Activated naive CD4-positive, alpha-beta T cell treated with anti-CD3 and anti-CD28 coated beads for 36 hours (primary cell): ENCODE measurements at regions of chr18 and their contacts with region 1.

Region 1: GRCh38 chr18:57833443-57834101 is 30.5 kb upstream of the ATP8B1 start:
- DNase-seq: peak; percentile 66
- H3K4me3 Mint-ChIP-seq: peak overlapping the region; percentile 49
- H3K27ac Mint-ChIP-seq: peak overlapping the region; percentile 81
- H3K4me1 Mint-ChIP-seq: peaks cover 36% of the 10 kb centered on the region
- H3K27me3 Mint-ChIP-seq: peaks cover 15% of the 10 kb centered on the region

Region 2: DNA sequence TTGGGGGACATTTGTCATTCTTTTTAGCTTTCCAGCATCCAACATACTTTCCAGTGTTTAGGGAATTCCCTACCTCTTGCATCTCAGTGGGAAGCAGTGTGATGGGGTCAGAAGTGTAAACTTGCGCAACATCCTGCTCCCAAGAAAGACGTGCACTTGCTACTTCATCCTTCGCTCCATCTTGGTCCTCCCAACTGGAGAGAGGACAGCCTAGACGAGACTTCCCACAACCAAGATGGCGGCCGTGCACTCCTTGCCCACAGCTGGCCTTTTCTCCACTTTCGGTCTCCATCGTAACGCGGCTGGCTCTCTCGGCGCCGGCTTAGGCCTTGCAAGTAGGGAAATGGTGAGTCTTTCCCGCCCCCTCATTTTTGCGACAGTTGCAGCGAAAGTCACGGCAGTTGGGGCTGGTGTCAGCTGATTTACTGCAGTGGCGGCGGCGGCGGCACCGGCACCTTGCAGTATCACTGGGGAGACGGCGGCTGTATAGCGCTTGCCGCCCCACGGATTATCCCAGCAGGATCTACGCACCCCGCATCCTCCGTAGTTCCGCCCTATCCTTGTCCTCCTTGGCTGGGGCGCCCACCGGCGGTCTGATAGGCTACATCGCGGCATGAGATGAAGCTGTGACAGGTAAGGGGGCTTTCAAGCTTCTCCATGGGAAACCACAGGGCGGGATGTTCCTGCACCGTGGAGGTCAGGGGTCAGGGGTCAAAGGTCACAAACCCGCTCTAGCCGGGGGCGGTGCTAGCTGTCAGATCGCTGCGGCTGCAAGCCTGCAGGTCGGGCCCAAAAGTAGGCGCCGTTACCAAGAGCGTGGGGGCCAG is 1182.4 kb before region 1 on chr18 and contains the start of gene WDR7:
- CTCF ChIA-PET with region 1: no interaction called
- intact Hi-C with region 1: loop called (anchors 10 kb)
- DNase-seq: peak; percentile 97
- H3K4me3 Mint-ChIP-seq: peak within 1 kb of the TSS; percentile 93
- H3K27ac Mint-ChIP-seq: peak within 1 kb of the TSS; percentile 95
- H3K4me1 Mint-ChIP-seq: peaks cover 42% of the 10 kb centered on the region
- H3K27me3 Mint-ChIP-seq: no peaks in the 10 kb centered on the region
- total RNA-seq, gene WDR7: 17.3 to 19.5 TPM

Region 3: DNA sequence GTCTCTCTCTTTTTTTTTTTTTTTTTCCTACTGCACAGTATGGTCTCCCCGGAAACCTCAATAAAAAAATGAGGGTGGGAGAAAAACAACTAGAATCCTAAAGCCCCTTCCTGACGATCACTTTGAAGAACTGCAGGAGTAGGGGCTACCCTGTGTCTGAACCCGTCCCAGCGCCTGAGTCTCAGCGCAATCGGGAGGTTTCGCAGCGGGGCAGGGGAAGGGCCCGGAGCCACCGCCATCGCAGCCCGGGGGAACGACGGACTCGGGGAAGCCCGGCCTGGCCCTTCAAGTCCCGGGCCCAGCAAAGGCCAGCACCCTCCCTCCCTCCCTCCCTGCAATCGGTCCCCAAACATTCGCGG is 212.3 kb before region 1 on chr18:
- CTCF ChIA-PET with region 1: no interaction called
- intact Hi-C with region 1: loop called (anchors 5 kb)
- DNase-seq: peak; percentile 28
- H3K4me3 Mint-ChIP-seq: peak overlapping the region; percentile 98
- H3K27ac Mint-ChIP-seq: peak overlapping the region; percentile 95
- H3K4me1 Mint-ChIP-seq: peaks cover 32% of the 10 kb centered on the region
- H3K27me3 Mint-ChIP-seq: no peaks in the 10 kb centered on the region

Region 4: GRCh38 chr18:57819671-57820460 is 13.7 kb before region 1 on chr18:
- CTCF ChIA-PET with region 1: no interaction called
- intact Hi-C with region 1: no loop called
- DNase-seq: peak; percentile 24
- H3K4me3 Mint-ChIP-seq: no peak overlapping the region
- H3K27ac Mint-ChIP-seq: no peak overlapping the region
- H3K4me1 Mint-ChIP-seq: no peaks in the 10 kb centered on the region
- H3K27me3 Mint-ChIP-seq: peaks cover 11% of the 10 kb centered on the region

Region 5: GRCh38 chr18:57921708-57922107 is 88.1 kb after region 1 on chr18:
- CTCF ChIA-PET with region 1: no interaction called
- intact Hi-C with region 1: loop called (anchors 5 kb)
- DNase-seq: peak; percentile 63
- H3K4me3 Mint-ChIP-seq: no peak overlapping the region
- H3K27ac Mint-ChIP-seq: no peak overlapping the region
- H3K4me1 Mint-ChIP-seq: no peaks in the 10 kb centered on the region
- H3K27me3 Mint-ChIP-seq: peaks cover 15% of the 10 kb centered on the region

Region 6: GRCh38 chr18:58615140-58616132 is 781.9 kb after region 1 on chr18:
- CTCF ChIA-PET with region 1: no interaction called
- intact Hi-C with region 1: loop called (anchors 1 kb)
- DNase-seq: peak; percentile 91
- H3K4me3 Mint-ChIP-seq: peak overlapping the region; percentile 40
- H3K27ac Mint-ChIP-seq: peak overlapping the region; percentile 85
- H3K4me1 Mint-ChIP-seq: peaks cover 46% of the 10 kb centered on the region
- H3K27me3 Mint-ChIP-seq: no peaks in the 10 kb centered on the region

Region 7: DNA sequence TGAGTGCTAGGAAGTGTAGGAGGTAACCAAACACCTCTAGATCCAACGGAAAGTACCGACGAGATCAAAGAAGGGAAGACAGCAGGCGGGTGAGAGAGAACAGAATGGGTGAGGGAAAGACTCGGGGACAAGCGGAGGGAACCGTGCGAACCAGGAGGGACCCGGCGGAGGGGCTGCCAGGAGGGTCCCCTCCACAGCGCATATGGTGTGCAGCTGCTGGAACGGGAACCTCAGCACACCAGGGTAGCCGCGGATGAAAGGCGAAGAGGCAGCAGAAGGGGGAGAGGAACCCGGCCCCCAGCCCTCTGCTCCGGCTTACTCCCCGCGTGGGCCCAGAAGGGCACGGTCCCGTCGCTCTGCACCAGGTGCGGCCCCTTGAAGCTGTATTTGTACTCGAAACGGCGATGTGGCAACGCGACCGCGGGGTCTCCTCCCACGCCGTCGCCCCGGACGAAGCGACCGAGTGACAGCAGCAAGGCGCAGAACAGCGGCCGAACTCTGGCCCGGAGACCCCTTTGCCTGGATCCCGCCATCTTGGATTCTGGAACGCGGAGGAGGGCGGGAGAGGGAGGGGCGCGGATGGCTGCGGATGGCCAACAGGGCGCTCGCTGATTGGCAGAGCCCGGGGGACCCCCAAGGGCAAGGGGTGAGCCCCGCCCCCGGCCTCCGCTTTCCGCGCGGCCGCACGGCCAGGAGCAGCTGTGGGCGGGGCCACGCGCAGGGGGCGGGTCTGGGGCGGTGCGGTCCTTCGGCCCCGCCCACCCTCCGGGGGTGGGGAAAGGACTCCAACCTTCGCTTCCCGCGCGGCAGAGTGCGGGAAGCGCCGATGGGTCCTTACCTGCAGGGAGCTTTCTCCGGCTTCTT is 1525.4 kb after region 1 on chr18 and contains the start of gene LMAN1:
- CTCF ChIA-PET with region 1: no interaction called
- intact Hi-C with region 1: loop called (anchors 10 kb)
- DNase-seq: peak; percentile 96
- H3K4me3 Mint-ChIP-seq: peak within 1 kb of the TSS; percentile 98
- H3K27ac Mint-ChIP-seq: peak within 1 kb of the TSS; percentile 98
- H3K4me1 Mint-ChIP-seq: peaks cover 36% of the 10 kb centered on the region
- H3K27me3 Mint-ChIP-seq: no peaks in the 10 kb centered on the region
- total RNA-seq, gene LMAN1: 146 to 151 TPM